Motor neuron (in vitro differentiated cells): ENCODE measurements at regions of chr7 and their contacts with region 1.

Region 1: GRCh38 chr7:100874577-100875355 is at the start of gene SRRT:
- ATAC-seq: peak; percentile 88 to 96 (median 94)
- H3K4me3 ChIP-seq: peak within 1 kb of the TSS; percentile 70 to 98 (median 91)
- H3K27ac ChIP-seq: peak within 1 kb of the TSS; percentile 97 to 98
- H3K4me1 ChIP-seq: peaks cover 15 to 19% of the 10 kb centered on the region in 2 donors
- total RNA-seq, gene SRRT: 28.4 to 149 (median 57.0) TPM

Region 2: DNA sequence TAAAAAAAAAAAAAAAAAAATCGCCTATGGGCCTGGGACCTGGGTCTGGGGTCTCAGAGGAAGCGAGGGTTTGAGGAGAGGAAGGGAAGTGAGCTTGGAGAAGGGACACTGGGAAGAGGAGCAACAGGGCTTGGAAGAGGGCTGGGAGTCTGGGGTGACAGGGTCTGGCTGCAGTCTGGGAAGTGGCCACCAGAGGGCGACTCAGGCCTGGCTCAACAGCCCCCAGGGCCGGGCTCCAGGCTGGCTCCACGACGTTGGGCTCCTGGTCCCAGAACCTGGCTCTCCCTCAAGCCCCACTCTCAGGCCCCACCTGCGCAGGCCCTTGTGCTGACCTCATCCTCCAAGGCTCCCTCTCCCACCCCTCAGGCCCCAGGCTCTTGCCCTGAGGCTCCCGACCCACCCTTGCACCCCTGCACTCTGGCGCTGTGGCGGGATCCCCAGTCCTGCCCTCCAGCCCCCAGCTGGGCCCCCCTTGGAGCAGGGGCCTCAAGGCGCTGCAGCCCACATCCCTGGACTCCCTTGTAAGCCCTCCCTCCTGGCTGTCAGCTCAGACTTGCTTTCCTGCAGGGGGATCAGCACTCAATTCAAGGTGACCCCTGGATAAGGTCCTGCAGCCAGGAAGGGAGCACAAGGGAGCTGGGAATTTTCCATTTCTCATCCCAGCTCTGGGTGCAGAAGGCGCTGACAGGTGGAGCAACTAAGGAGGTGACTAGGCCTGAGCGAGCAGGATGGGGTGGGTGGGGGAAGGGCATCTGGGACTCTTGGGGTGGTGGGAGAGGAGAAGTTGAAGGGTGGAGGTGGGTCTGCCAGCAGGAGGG is 405.3 kb before region 1 on chr7:
- in situ Hi-C with region 1: loop called in 5 of 9 experiments (anchors 25 kb)
- ATAC-seq: peak; percentile 69 to 89 (median 85)
- H3K4me3 ChIP-seq: no peak overlapping the region
- H3K27ac ChIP-seq: peak overlapping the region in 1 of 2 donors; percentile 48
- H3K4me1 ChIP-seq: peaks cover 3 to 15% of the 10 kb centered on the region in 2 donors

Region 3: DNA sequence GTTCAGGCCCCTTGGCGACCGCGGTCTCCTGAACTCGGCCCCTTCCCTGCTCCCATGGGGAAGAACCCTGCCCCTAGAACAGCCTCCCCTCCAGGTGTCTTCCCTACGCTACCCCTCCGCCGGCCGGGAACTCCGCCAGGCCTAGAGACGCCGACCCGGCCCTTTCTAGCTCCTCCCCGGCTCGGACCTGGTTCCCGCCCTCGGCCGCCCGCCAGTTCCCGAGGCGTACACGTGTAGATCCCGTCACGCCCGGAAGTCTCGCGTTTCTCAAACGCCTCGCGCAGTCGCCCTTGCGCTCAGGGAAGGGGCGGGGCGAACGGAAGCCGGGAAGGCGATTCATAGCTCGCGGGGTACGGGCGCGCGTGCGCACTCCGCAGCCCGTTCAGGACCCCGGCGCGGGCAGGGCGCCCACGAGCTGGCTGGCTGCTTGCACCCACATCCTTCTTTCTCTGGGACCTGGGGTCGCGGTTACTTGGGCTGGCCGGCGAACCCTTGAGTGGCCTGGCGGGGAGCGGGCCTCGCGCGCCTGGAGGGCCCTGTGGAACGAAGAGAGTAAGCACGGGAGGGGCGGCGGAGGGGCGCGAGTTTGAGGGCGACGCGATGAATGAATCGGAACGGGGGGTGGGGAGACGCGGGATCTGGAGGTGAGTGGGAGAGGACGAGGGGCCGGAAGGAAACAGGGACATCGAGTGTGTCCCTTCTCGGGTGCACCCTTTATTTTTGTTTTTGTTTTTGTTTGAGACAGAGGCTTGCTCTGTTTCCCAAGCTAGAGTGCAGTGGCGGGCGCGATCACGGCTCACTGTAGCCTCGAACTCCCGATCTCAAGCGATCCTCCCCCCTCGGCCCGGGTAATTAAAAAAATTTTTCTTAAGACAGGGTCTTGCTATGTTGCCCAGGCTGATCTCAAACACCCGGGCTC is 168.8 kb before region 1 on chr7 and contains the start of gene POP7:
- in situ Hi-C with region 1: loop called in 4 of 9 experiments (anchors 25 kb)
- ATAC-seq: peak; percentile 88 to 96 (median 92)
- H3K4me3 ChIP-seq: peak within 1 kb of the TSS; percentile 56 to 99 (median 77)
- H3K27ac ChIP-seq: peak within 1 kb of the TSS; percentile 94 to 98
- H3K4me1 ChIP-seq: peaks cover 9 to 12% of the 10 kb centered on the region in 2 donors
- total RNA-seq, gene POP7: 32.0 to 59.6 (median 38.6) TPM

Region 4: DNA sequence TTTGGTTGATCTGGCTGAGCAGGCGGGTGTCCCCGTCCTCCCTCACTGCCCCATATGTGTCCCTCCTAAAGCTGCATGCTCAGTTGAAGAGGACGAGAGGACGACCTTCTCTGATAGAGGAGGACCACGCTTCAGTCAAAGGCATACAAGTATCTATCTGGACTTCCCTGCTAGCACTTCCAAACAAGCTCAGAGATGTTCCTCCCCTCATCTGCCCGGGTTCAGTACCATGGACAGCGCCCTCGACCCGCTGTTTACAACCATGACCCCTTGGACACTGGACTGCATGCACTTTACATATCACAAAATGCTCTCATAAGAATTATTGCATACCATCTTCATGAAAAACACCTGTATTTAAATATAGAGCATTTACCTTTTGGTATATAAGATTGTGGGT is 183.6 kb after region 1 on chr7:
- in situ Hi-C with region 1: loop called in 1 of 9 experiments (anchors 25 kb)
- ATAC-seq: peak in 4 of 8 experiments; percentile 41 to 61 (median 54)
- H3K4me3 ChIP-seq: no peak overlapping the region
- H3K27ac ChIP-seq: no peak overlapping the region
- H3K4me1 ChIP-seq: peaks cover 0 to 2% of the 10 kb centered on the region in 2 donors

Region 5: DNA sequence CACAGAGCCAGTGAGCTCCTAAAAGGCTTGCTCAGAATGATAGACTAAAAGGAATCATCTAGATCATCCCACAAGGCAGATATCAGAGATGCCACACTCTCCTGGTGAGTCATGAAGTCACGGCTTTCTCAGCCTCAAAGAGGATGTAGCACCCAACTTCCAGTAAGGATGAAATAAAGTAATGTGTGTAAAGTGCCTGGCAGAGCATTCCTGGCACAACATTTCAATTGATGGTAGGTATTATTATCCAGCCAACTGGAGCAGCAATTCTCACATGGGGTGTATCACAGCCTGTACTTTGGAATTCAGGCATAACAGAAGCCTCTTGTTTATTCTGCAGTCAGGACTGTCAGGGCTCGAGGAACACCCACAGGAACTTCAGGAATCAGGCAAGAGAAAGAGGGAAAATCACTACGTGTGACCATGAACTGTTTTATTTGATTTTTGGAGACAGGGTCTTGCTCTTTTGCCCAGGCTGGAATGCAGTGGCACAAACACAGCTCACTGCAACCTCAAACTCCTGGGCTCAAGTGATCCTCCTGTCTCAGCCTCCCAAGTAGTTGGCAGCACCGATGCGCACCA is 310.6 kb after region 1 on chr7:
- in situ Hi-C with region 1: loop called in 1 of 9 experiments (anchors 25 kb)
- ATAC-seq: peak in 2 of 8 experiments; percentile 4 to 26
- H3K4me3 ChIP-seq: no peak overlapping the region
- H3K27ac ChIP-seq: no peak overlapping the region
- H3K4me1 ChIP-seq: peaks cover 3 to 8% of the 10 kb centered on the region in 2 donors

Region 6: GRCh38 chr7:101299511-101300464 is 425.0 kb after region 1 on chr7:
- in situ Hi-C with region 1: loop called in 1 of 9 experiments (anchors 25 kb)
- ATAC-seq: peak in 4 of 8 experiments; percentile 21 to 76 (median 58)
- H3K4me3 ChIP-seq: no peak overlapping the region
- H3K27ac ChIP-seq: no peak overlapping the region
- H3K4me1 ChIP-seq: no peaks in the 10 kb centered on the region

Region 7: GRCh38 chr7:101494602-101495329 is 620.0 kb after region 1 on chr7:
- in situ Hi-C with region 1: no loop called
- ATAC-seq: peak in 4 of 8 experiments; percentile 16 to 50 (median 44)
- H3K4me3 ChIP-seq: no peak overlapping the region
- H3K27ac ChIP-seq: no peak overlapping the region
- H3K4me1 ChIP-seq: no peaks in the 10 kb centered on the region